Mammary epithelial cell (primary cell): ENCODE measurements at regions of chr7 and their contacts with region 1.

Region 1: GRCh38 chr7:31735991-31736982 is 49.3 kb downstream of the PPP1R17 start:
- DNase-seq: peak; percentile 68
- H3K4me3 ChIP-seq: no peak overlapping the region
- H3K27ac ChIP-seq: peak overlapping the region; percentile 37
- H3K4me1 ChIP-seq: peaks cover 20% of the 10 kb centered on the region
- H3K27me3 ChIP-seq: no peaks in the 10 kb centered on the region
- CTCF ChIP-seq: peak; percentile 94

Region 2: DNA sequence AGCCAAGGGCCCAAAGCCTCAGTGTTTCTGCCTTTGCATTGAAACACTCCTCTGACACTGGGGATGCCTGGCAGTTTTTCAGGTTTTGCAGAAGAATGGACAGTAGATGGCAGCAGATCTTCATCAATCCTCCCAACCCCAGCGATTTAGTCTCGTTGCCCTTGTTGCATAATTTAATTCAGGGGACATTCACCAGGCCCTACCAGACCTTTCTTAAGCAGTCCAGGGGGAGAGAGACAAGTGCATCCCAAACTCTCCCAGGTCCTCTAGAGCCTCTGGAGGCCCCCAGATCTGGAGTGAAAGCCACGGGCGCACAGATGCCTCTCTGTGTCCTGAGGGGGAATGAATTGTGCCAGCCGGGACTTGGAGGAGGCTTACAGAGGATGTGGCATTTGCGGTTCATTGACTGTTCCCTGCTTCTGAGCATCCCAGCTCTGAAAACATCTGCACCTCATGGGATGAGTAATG is 935.5 kb before region 1 on chr7:
- CTCF ChIA-PET with region 1: no interaction called
- dilution Hi-C with region 1: no loop called
- in situ Hi-C with region 1: no loop called
- intact Hi-C with region 1: loop called (anchors 2 kb)
- DNase-seq: peak; percentile 86
- H3K4me3 ChIP-seq: no peak overlapping the region
- H3K27ac ChIP-seq: peak overlapping the region; percentile 24
- H3K4me1 ChIP-seq: peaks cover 75% of the 10 kb centered on the region
- H3K27me3 ChIP-seq: no peaks in the 10 kb centered on the region
- CTCF ChIP-seq: peak; percentile 71 to 72

Region 3: GRCh38 chr7:31028417-31028992 is 707.8 kb before region 1 on chr7:
- CTCF ChIA-PET with region 1: no interaction called
- dilution Hi-C with region 1: no loop called
- in situ Hi-C with region 1: no loop called
- intact Hi-C with region 1: no loop called
- DNase-seq: no peak
- H3K4me3 ChIP-seq: no peak overlapping the region
- H3K27ac ChIP-seq: no peak overlapping the region
- H3K4me1 ChIP-seq: no peaks in the 10 kb centered on the region
- H3K27me3 ChIP-seq: no peaks in the 10 kb centered on the region
- CTCF ChIP-seq: no peak

Region 4: DNA sequence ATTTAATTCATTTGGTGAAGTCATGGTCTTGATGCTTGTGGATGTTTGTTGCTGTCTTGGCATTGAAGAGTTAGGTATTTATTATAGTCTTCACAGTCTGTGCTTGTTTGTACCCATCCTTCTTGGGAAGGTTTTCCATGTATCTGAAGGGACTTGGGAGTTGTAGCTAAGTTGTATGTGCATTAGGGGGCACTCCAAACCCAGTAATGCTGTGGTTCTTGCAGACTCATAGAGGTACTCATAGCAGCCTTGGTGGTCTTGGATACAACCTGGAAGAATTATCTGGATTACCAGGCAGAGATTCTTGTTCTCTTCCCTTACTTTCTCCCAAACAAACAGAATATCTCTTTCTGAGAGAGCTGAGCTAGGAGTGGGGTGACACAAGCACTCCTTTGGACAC is 590.9 kb before region 1 on chr7:
- CTCF ChIA-PET with region 1: no interaction called
- dilution Hi-C with region 1: loop called (anchors 25 kb)
- in situ Hi-C with region 1: no loop called
- intact Hi-C with region 1: loop called (anchors 5 kb)
- DNase-seq: no peak
- H3K4me3 ChIP-seq: no peak overlapping the region
- H3K27ac ChIP-seq: no peak overlapping the region
- H3K4me1 ChIP-seq: no peaks in the 10 kb centered on the region
- H3K27me3 ChIP-seq: no peaks in the 10 kb centered on the region
- CTCF ChIP-seq: no peak

Region 5: DNA sequence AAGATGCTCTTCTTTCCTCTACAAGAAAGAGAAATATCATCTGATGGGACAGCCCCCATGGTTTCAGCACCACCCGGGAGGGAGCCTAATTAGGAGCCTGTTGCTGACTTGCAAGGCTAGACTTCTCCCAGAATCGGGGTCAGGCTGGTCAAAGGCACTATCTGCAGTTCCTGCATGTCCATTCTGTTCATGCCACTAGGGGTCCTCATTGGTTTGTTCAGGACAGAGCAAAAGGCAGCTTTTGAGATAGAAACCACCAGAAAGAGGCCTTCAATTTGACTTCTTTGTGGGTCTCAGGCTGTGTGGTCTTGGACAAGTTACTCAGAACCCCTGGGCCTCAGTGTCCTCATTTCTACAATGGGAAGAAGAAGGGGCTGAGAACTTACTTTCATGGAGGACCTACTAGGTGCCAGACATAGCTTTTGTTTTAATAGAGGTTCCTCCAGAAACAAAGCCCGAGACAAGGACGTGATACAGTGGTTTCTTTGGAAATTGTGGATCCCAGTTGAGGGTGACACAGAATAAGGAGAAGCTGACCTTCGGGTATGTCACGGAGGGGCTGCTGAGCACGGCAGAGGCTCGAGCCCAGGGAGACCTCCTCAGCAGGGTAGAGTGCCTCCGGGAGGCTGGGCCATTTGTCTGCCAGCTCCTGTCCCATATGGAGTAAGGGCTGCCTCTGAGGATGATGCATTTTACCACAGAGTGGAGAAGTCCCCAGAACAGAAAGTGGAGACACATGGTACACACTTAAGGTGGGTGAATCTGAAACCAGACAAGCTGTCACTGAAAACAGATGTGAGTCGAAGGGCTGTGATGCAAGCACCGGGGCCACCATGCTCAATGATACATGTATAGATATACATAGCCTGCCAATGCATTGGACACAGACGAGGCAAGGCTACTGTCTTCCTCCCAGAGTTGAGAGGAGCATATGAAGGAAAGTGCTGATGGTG is 362.7 kb before region 1 on chr7:
- CTCF ChIA-PET with region 1: no interaction called
- dilution Hi-C with region 1: no loop called
- in situ Hi-C with region 1: loop called in 1 of 2 experiments (anchors 10 kb)
- intact Hi-C with region 1: loop called (anchors 1 kb)
- DNase-seq: peak; percentile 47
- H3K4me3 ChIP-seq: no peak overlapping the region
- H3K27ac ChIP-seq: no peak overlapping the region
- H3K4me1 ChIP-seq: no peaks in the 10 kb centered on the region
- H3K27me3 ChIP-seq: peaks cover 2% of the 10 kb centered on the region
- CTCF ChIP-seq: peak; percentile 86 to 91

Region 6: GRCh38 chr7:31493714-31494181 is 242.5 kb before region 1 on chr7:
- CTCF ChIA-PET with region 1: no interaction called
- dilution Hi-C with region 1: no loop called
- in situ Hi-C with region 1: no loop called
- intact Hi-C with region 1: loop called (anchors 5 kb)
- DNase-seq: peak; percentile 90
- H3K4me3 ChIP-seq: no peak overlapping the region
- H3K27ac ChIP-seq: peak overlapping the region; percentile 66
- H3K4me1 ChIP-seq: peaks cover 22% of the 10 kb centered on the region
- H3K27me3 ChIP-seq: no peaks in the 10 kb centered on the region
- CTCF ChIP-seq: no peak

Region 7: DNA sequence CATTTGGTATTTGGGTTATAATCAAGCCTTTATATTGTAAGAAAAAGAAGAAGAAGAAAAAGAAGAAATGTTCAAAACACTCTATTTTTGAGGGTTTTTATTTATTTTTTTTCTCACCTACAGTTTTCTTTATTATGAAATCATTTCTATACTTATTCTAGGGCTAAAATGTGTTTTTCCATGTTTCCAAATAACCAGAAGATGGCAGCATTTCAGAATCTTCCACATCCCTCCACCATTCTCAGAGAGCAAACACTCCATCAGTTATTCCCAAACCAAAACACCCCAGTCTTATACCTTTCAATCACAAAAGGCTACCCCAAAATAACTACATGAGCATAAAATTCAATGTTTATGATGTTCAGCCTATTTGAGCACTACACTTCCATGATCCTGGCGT is 88.0 kb before region 1 on chr7:
- CTCF ChIA-PET with region 1: no interaction called
- dilution Hi-C with region 1: no loop called
- in situ Hi-C with region 1: loop called in 1 of 2 experiments (anchors 10 kb)
- intact Hi-C with region 1: loop called (anchors 1 kb)
- DNase-seq: no peak
- H3K4me3 ChIP-seq: no peak overlapping the region
- H3K27ac ChIP-seq: no peak overlapping the region
- H3K4me1 ChIP-seq: peaks cover 10% of the 10 kb centered on the region
- H3K27me3 ChIP-seq: no peaks in the 10 kb centered on the region
- CTCF ChIP-seq: peak; percentile 8 to 44